Panc1 (cell line): ENCODE measurements at regions of chr7 and their contacts with region 1.

Region 1: DNA sequence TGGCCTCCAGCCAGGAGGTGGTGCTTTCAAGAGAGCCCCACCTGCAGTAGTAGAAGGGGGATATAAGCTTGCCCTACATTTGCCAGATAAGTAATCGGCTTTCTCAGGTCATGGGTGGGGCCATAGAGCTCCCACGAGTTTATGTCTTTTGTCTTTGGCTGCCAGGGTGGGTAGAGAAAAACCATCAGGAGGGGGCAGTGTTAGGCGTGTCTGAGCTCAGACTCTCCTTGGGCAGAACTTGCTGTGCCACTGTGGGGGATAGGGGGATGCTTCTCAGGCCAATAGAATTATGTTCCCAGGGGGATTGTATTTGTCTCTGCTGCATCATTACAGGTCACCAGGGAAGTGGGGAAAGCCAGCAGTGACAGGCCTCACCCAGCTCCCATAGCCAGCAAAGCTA is 12.3 kb upstream of the MRPS33 start:
- DNase-seq: no peak
- ATAC-seq: no peak
- H3K4me3 ChIP-seq: no peak overlapping the region
- H3K27ac ChIP-seq: no peak overlapping the region
- H3K4me1 ChIP-seq: no peaks in the 10 kb centered on the region
- H3K27me3 ChIP-seq: peaks cover 3% of the 10 kb centered on the region; the same call in 1 of the 2 replicates
- CTCF ChIP-seq: no peak

Region 2: GRCh38 chr7:140439359-140439758 is 587.7 kb before region 1 on chr7:
- CTCF ChIA-PET with region 1: interaction called, 11 read pairs
- POLR2A ChIA-PET with region 1: no interaction called
- in situ Hi-C with region 1: no loop called
- intact Hi-C with region 1: no loop called
- DNase-seq: no peak
- ATAC-seq: no peak
- H3K4me3 ChIP-seq: no peak overlapping the region
- H3K27ac ChIP-seq: no peak overlapping the region
- H3K4me1 ChIP-seq: no peaks in the 10 kb centered on the region
- H3K27me3 ChIP-seq: no peaks in the 10 kb centered on the region
- CTCF ChIP-seq: no peak

Region 3: DNA sequence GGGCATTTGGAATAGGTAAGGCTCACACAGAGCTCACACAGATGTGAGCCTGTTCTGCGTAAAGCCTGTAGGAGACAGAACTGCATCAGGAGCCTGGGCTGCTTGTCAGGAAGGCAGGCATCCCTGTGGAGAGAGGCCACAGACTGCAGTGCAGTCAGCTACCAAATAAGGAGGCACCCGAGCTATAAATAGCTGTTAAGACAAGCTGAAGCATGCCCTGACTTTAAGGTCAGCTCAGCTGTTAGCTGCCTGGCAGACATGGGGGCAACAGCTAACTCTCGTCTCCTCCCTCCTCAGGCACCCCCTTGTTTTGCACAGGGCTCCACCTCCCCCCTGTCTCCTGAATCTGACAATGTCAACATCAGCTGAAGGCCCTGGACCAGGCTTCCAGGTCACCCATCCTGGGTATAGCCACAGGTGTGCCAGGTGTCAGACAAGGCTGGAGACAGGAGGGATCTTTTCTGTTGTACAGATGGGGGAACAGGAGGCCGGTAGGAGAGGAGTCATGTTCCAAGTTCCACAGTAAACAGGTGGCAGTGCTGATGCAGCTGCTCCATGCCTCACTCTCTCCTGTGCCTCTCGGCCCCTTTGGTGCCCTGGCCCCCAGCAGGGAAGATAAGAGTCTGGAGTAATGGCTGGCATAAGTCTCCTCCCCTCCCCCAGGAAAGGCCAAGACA is 520.1 kb before region 1 on chr7:
- CTCF ChIA-PET with region 1: interaction called, 15 read pairs
- POLR2A ChIA-PET with region 1: no interaction called
- in situ Hi-C with region 1: no loop called
- intact Hi-C with region 1: no loop called
- DNase-seq: no peak
- ATAC-seq: peak; percentile 53
- H3K4me3 ChIP-seq: no peak overlapping the region
- H3K27ac ChIP-seq: no peak overlapping the region
- H3K4me1 ChIP-seq: no peaks in the 10 kb centered on the region; the same call in 1 of the 2 replicates
- H3K27me3 ChIP-seq: no peaks in the 10 kb centered on the region
- CTCF ChIP-seq: no peak

Region 4: DNA sequence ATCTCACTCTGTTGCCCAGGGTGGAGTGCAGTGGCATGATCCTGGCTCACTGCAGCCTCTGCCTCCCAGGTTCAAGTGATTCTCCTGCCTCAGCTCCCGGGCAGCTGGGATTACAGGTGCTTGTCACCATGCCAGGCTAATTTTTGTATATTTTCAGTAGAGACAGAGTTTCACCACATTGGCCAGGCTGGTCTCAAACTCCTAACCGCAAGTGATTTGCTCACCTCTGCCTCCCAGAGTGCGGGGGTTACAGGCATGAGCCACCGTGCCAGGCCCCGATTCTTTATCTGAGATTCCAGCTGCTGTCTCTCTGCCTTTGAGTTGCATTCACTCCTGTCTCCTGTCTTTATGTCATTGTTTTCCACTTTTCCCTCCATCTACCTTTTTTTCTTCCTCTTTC is 215.5 kb after region 1 on chr7:
- CTCF ChIA-PET with region 1: no interaction called
- POLR2A ChIA-PET with region 1: no interaction called
- in situ Hi-C with region 1: no loop called
- intact Hi-C with region 1: loop called (anchors 10 kb)
- DNase-seq: no peak
- ATAC-seq: no peak
- H3K4me3 ChIP-seq: no peak overlapping the region
- H3K27ac ChIP-seq: no peak overlapping the region
- H3K4me1 ChIP-seq: no peaks in the 10 kb centered on the region
- H3K27me3 ChIP-seq: peaks cover 2% of the 10 kb centered on the region
- CTCF ChIP-seq: no peak